Heart right ventricle (tissue), 16 donors: ENCODE measurements at regions of chr1 and their contacts with region 1.

Region 1: GRCh38 chr1:88998716-88999115 is 6.3 kb upstream of the KYAT3 start:
- DNase-seq: peak in 1 of 2 donors; percentile 30
- ATAC-seq: peak; percentile 73 to 92 (median 85)
- H3K4me3 ChIP-seq: no peak overlapping the region
- H3K27ac ChIP-seq: no peak overlapping the region
- H3K4me1 ChIP-seq: peaks cover 0 to 12% (median 2%) of the 10 kb centered on the region in 9 donors
- H3K27me3 ChIP-seq: no peaks in the 10 kb centered on the region
- CTCF ChIP-seq: peak; percentile 51 to 72 (median 62)

Region 2: DNA sequence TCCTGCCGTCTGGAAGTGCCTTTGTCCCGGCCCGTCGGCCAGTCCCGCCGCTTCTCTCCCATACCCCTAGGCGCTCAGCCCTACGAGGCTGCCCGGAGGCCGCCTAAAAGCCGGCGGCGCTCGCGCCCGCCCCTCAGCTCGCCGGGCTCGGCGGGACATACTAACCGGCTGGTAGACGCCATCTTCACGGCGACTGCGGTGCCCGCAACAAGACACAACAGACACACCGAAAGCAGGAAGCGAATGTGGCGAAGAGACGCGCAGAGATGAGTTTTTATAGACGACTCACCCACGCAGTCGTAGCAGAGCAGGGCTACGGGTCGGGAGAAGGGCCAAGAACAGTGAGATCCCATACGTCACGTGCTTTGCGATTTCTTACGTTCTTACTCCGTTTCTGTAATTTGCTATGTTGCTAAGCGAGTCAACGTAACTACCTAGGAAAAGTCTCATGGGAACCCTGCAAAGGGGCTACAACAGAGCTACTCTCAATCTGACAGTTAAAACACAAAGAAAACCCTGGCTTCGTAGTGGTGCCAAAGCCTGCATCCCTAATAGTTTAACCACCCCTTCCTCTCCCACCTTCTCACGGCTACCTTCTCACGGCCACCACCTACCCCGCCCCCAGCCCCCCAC is 107.3 kb before region 1 on chr1 and contains the start of gene GTF2B:
- intact Hi-C with region 1: no loop called
- DNase-seq: peak; percentile 84 to 96
- ATAC-seq: peak; percentile 89 to 96 (median 95)
- H3K4me3 ChIP-seq: peak within 1 kb of the TSS; percentile 74 to 97 (median 90)
- H3K27ac ChIP-seq: peak within 1 kb of the TSS; percentile 61 to 99 (median 90)
- H3K4me1 ChIP-seq: peaks cover 2 to 39% (median 28%) of the 10 kb centered on the region in 9 donors
- H3K27me3 ChIP-seq: no peaks in the 10 kb centered on the region
- CTCF ChIP-seq: peak in 2 of 9 donors; percentile 5 to 8
- total RNA-seq, gene GTF2B: 10.5 to 16.0 (median 12.6) TPM

Region 3: GRCh38 chr1:89085781-89086180 is 87.1 kb after region 1 on chr1:
- intact Hi-C with region 1: loop called in 2 of 10 experiments (anchors 5 to 10 kb)
- DNase-seq: peak in 1 of 2 donors; percentile 76
- ATAC-seq: peak in 4 of 8 donors; percentile 67 to 82 (median 69)
- H3K4me3 ChIP-seq: no peak overlapping the region
- H3K27ac ChIP-seq: no peak overlapping the region
- H3K4me1 ChIP-seq: peaks cover 0 to 11% (median under 1%) of the 10 kb centered on the region in 9 donors
- H3K27me3 ChIP-seq: no peaks in the 10 kb centered on the region
- CTCF ChIP-seq: peak in 8 of 9 donors; percentile 60 to 91 (median 68)

Region 4: GRCh38 chr1:89276690-89277089 is 278.0 kb after region 1 on chr1:
- intact Hi-C with region 1: loop called in 1 of 10 experiments (anchors 5 kb)
- DNase-seq: no peak
- ATAC-seq: no peak
- H3K4me3 ChIP-seq: no peak overlapping the region
- H3K27ac ChIP-seq: no peak overlapping the region
- H3K4me1 ChIP-seq: peaks cover 0 to 59% (median 0%) of the 10 kb centered on the region in 9 donors
- H3K27me3 ChIP-seq: no peaks in the 10 kb centered on the region
- CTCF ChIP-seq: peak in 3 of 9 donors; percentile 23 to 49 (median 28)

Region 5: GRCh38 chr1:89394851-89395250 is 396.1 kb after region 1 on chr1:
- intact Hi-C with region 1: no loop called
- DNase-seq: no peak
- ATAC-seq: no peak
- H3K4me3 ChIP-seq: no peak overlapping the region
- H3K27ac ChIP-seq: no peak overlapping the region
- H3K4me1 ChIP-seq: no peaks in the 10 kb centered on the region
- H3K27me3 ChIP-seq: no peaks in the 10 kb centered on the region
- CTCF ChIP-seq: no peak

Region 6: DNA sequence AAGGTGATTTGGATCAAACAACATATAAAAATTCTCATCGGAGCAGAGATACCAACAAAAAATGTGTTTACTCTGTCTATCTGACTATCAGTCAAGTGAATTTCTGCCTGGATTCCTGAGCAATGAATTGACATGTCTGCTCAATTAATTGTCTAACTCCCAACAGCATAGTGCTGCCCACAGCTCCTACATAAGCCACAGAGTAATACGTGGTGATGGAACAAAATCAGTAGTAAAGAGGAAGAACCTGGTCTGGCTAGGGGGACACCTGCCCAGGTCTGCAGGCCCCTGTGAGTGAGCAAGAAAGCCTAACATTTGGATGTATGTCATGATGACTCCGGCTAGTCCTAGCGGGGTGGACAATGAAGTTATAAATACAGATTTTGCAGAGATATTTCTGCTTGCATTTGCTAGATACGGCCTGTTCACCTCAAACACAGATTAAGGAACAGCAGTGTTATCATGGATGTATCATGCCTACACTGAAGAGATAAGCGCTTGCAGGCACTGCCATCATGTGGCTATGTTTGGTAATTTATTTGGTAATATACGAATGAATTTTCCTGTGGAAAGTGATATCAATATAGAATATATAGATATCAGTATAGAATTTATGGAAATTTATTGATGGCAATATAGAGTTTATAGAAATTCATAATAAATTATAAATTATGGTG is 456.3 kb after region 1 on chr1:
- intact Hi-C with region 1: loop called (anchors 2 to 10 kb)
- DNase-seq: peak in 1 of 2 donors; percentile 39
- ATAC-seq: peak in 1 of 8 donors; percentile 61
- H3K4me3 ChIP-seq: no peak overlapping the region
- H3K27ac ChIP-seq: no peak overlapping the region
- H3K4me1 ChIP-seq: no peaks in the 10 kb centered on the region
- H3K27me3 ChIP-seq: no peaks in the 10 kb centered on the region
- CTCF ChIP-seq: peak; percentile 53 to 81 (median 68)

Region 7: DNA sequence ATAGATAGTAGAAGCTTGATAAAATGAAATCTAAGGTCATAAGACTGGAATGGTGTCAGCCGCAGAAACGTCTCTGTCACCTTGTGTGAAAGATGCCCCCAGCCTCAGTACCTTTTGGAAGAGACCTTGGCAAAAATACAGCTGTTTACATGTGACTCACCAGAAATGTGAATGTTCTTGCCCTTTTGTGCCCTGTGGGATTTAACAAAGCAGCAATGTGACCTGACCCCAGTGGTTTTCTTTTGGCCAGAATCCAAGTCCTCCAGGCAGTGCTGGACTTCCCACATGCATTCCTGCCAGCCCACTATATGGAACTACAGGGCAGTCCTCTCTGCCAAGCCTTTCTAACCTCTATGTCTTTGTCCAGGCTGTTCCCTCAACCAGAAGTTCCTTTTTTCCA is 607.0 kb after region 1 on chr1:
- intact Hi-C with region 1: loop called in 1 of 10 experiments (anchors 5 kb)
- DNase-seq: no peak
- ATAC-seq: no peak
- H3K4me3 ChIP-seq: no peak overlapping the region
- H3K27ac ChIP-seq: peak overlapping the region in 4 of 10 donors; percentile 25 to 81 (median 40)
- H3K4me1 ChIP-seq: peaks cover 11 to 82% (median 69%) of the 10 kb centered on the region in 9 donors
- H3K27me3 ChIP-seq: no peaks in the 10 kb centered on the region
- CTCF ChIP-seq: no peak